ENCODE measurements at regions of chr6 and their contacts with region 1.

Region 1: DNA sequence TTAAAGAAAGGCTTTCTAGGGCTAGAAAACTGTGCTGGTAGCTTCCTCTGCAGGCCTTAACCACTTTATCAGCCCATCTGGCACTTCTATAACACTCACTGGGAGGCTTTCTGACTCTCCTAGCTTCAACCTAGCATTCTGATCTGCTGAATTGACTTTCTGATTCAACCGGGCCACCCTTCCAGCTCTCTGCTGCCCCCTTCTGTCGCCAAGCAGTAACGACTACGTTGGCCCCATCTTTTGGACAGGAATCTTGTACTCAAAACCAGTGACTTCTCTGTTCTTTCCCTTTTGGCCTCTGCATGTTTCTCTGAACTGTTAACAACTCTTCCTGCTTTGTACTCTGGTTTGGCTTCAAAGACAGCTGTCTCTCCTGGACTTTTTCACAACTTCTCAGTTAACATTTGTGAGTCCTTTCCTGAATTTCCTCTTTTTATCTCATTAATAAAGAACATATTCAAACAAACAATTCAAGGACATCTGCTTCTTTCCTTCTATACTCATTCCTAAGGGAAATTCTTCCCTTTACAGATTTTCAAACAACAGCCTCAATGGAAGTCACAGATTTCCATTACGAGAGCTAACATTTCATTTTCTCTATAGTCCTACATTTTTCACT is 43.9 kb upstream of the FAM135A start:
- DNase-seq: peak; percentile 40 to 62
- ATAC-seq: peak; percentile 80 to 89
- H3K4me3 ChIP-seq: no peak overlapping the region
- H3K27ac ChIP-seq: peak overlapping the region in 1 of 2 experiments; percentile 4; a peak in 1 of 6 replicates
- H3K4me1 ChIP-seq: peaks cover 18% of the 10 kb centered on the region
- CTCF ChIP-seq: peak; percentile 68
- EP300 ChIP-seq: no peak
- POLR2A ChIP-seq: no peak
- RAD21 ChIP-seq: peak; percentile 74 to 79

Region 2: GRCh38 chr6:70221025-70221714 is 148.3 kb before region 1 on chr6:
- CTCF ChIA-PET with region 1: interaction called, 11 read pairs
- POLR2A ChIA-PET with region 1: no interaction called
- DNase-seq: peak; percentile 12 to 15
- ATAC-seq: peak; percentile 34 to 49; a peak in 3 of 6 replicates
- H3K4me3 ChIP-seq: no peak overlapping the region
- H3K27ac ChIP-seq: no peak overlapping the region
- H3K4me1 ChIP-seq: no peaks in the 10 kb centered on the region
- CTCF ChIP-seq: peak; percentile 68
- EP300 ChIP-seq: no peak
- POLR2A ChIP-seq: no peak
- RAD21 ChIP-seq: peak; percentile 69 to 81

Region 3: GRCh38 chr6:70310063-70310694 is 59.3 kb before region 1 on chr6:
- CTCF ChIA-PET with region 1: interaction called, 82 read pairs
- POLR2A ChIA-PET with region 1: interaction called, 8 read pairs
- DNase-seq: peak in 1 of 2 experiments; percentile 54
- ATAC-seq: peak in 1 of 2 experiments; percentile 64; a peak in 2 of 6 replicates
- H3K4me3 ChIP-seq: no peak overlapping the region
- H3K27ac ChIP-seq: no peak overlapping the region
- H3K4me1 ChIP-seq: no peaks in the 10 kb centered on the region
- CTCF ChIP-seq: peak; percentile 71
- EP300 ChIP-seq: no peak
- POLR2A ChIP-seq: no peak
- RAD21 ChIP-seq: peak; percentile 76 to 79

Region 4: GRCh38 chr6:70315079-70315751 is 54.2 kb before region 1 on chr6:
- CTCF ChIA-PET with region 1: interaction called, 82 read pairs
- POLR2A ChIA-PET with region 1: interaction called, 8 read pairs
- DNase-seq: no peak
- ATAC-seq: no peak
- H3K4me3 ChIP-seq: no peak overlapping the region
- H3K27ac ChIP-seq: no peak overlapping the region
- H3K4me1 ChIP-seq: no peaks in the 10 kb centered on the region
- CTCF ChIP-seq: no peak
- EP300 ChIP-seq: no peak
- POLR2A ChIP-seq: no peak
- RAD21 ChIP-seq: no peak

Region 5: GRCh38 chr6:70336996-70337742 is 32.3 kb before region 1 on chr6:
- CTCF ChIA-PET with region 1: no interaction called
- POLR2A ChIA-PET with region 1: no interaction called
- DNase-seq: no peak
- ATAC-seq: no peak
- H3K4me3 ChIP-seq: no peak overlapping the region
- H3K27ac ChIP-seq: no peak overlapping the region
- H3K4me1 ChIP-seq: no peaks in the 10 kb centered on the region
- CTCF ChIP-seq: no peak
- EP300 ChIP-seq: no peak
- POLR2A ChIP-seq: no peak
- RAD21 ChIP-seq: no peak

Region 6: DNA sequence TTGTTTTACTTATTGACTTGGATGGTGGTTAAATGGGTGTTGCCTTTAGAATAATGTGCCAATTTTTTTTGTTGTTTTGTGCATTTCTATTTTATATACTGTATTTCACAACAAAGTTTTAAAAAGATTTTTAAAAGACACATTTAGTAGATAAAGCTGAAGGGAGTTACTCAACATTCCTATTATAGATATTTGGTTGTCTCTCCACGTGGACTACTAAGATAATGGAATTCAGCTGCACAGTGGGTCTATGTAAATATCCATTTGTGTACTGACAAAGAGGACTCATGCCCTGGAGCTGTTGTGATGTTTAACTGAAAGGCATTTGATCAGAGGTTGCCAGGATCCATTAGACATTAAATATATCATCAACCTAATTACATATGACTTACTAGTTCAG is 20.6 kb after region 1 on chr6:
- CTCF ChIA-PET with region 1: interaction called, 18 read pairs
- POLR2A ChIA-PET with region 1: no interaction called
- DNase-seq: no peak
- ATAC-seq: no peak
- H3K4me3 ChIP-seq: no peak overlapping the region
- H3K27ac ChIP-seq: no peak overlapping the region
- H3K4me1 ChIP-seq: peaks cover 8% of the 10 kb centered on the region
- CTCF ChIP-seq: no peak
- EP300 ChIP-seq: no peak
- POLR2A ChIP-seq: no peak
- RAD21 ChIP-seq: no peak

Region 7: GRCh38 chr6:70413114-70413991 is 43.9 kb after region 1 on chr6 and contains the start of gene FAM135A:
- CTCF ChIA-PET with region 1: interaction called, 42 read pairs
- POLR2A ChIA-PET with region 1: interaction called, 9 read pairs
- DNase-seq: peak; percentile 76 to 98
- ATAC-seq: peak; percentile 92 to 95
- H3K4me3 ChIP-seq: peak within 1 kb of the TSS; percentile 77
- H3K27ac ChIP-seq: peak within 1 kb of the TSS; percentile 94 to 96
- H3K4me1 ChIP-seq: peaks cover 26% of the 10 kb centered on the region; the same call in 2 of the 3 replicates
- CTCF ChIP-seq: no peak
- EP300 ChIP-seq: no peak
- POLR2A ChIP-seq: peak; percentile 80
- RAD21 ChIP-seq: no peak
- polyA plus RNA-seq, gene FAM135A: 24.6 and 33.6 TPM in 2 replicates

Measured in A549 (cell line).